MCF 10A (cell line): ENCODE measurements at regions of chrX and their contacts with region 1.

Region 1: GRCh38 chrX:127038065-127038464 is 218.5 kb downstream of the PRR32 start:
- DNase-seq: peak; percentile 33
- H3K4me3 Mint-ChIP-seq: no peak overlapping the region
- H3K27ac Mint-ChIP-seq: no peak overlapping the region
- H3K4me1 Mint-ChIP-seq: peaks cover 7% of the 10 kb centered on the region
- H3K27me3 Mint-ChIP-seq: no peaks in the 10 kb centered on the region
- CTCF ChIP-seq: peak; percentile 27

Region 2: GRCh38 chrX:125998432-125998831 is 1039.6 kb before region 1 on chrX:
- CTCF ChIA-PET with region 1: interaction called, 3 read pairs
- POLR2A ChIA-PET with region 1: no interaction called
- intact Hi-C with region 1: loop called (anchors 5 kb)
- DNase-seq: peak; percentile 49
- H3K4me3 Mint-ChIP-seq: no peak overlapping the region
- H3K27ac Mint-ChIP-seq: no peak overlapping the region
- H3K4me1 Mint-ChIP-seq: no peaks in the 10 kb centered on the region
- H3K27me3 Mint-ChIP-seq: no peaks in the 10 kb centered on the region
- CTCF ChIP-seq: peak; percentile 42

Region 3: GRCh38 chrX:126770194-126770593 is 267.9 kb before region 1 on chrX:
- CTCF ChIA-PET with region 1: interaction called, 56 read pairs
- POLR2A ChIA-PET with region 1: no interaction called
- intact Hi-C with region 1: loop called (anchors 1 kb)
- DNase-seq: peak; percentile 57
- H3K4me3 Mint-ChIP-seq: no peak overlapping the region
- H3K27ac Mint-ChIP-seq: no peak overlapping the region
- H3K4me1 Mint-ChIP-seq: no peaks in the 10 kb centered on the region
- H3K27me3 Mint-ChIP-seq: no peaks in the 10 kb centered on the region
- CTCF ChIP-seq: peak; percentile 62